Activated B cell treated with CpG ODN at 0.5 μM for 24 hours (primary cell): ENCODE measurements at regions of chr12 and their contacts with region 1.

Region 1: DNA sequence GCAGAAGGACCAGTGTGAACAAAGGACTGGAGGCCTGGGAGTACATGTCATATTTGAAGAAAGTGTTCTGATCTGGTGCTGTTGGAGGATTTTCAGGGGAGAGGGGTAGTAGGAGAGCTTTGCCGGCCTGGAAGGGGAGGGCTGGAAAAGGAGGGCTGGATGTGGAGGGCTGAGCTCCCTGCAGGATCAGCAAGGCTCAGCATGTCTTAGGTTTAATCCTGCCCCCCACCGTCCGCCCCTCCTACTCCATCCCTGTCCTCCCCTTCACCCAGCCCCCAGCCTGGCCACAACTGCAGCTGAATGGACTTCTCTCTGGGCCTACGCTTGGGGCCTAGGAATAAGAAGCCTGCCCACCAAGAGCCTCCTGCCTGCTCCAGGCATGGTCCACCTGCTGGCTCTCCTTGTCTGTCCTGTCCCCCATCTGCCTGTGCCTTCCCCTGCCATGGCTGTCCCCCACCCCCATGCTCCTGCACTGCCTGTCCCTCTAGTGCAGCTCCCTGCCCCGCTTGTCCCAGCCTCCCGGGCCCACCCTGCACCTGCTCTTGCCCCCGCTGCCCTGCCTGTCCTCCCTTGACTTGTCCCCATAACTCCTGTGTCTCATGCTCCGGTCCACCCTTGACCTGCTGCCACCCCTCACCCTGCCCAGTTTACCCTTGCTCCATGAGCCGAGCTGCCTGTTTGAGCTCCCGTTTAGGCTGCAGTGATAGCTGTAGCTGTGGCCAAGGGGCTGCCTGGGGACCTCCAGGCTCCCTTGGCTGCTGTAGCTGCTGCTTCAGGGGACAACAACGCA is 9.8 kb upstream of the RARG start:
- DNase-seq: no peak
- ATAC-seq: no peak
- H3K4me3 Mint-ChIP-seq: no peak overlapping the region
- H3K27ac Mint-ChIP-seq: no peak overlapping the region
- H3K4me1 Mint-ChIP-seq: peaks cover 20% of the 10 kb centered on the region
- H3K27me3 Mint-ChIP-seq: peaks cover 4% of the 10 kb centered on the region
- CTCF ChIP-seq: no peak

Region 2: GRCh38 chr12:52050761-52051541 is 1190.9 kb before region 1 on chr12 and contains the start of gene NR4A1:
- CTCF ChIA-PET with region 1: no interaction called
- POLR2A ChIA-PET with region 1: no interaction called
- intact Hi-C with region 1: no loop called
- DNase-seq: peak; percentile 100
- ATAC-seq: peak; percentile 82
- H3K4me3 Mint-ChIP-seq: peak within 1 kb of the TSS; percentile 92
- H3K27ac Mint-ChIP-seq: peak within 1 kb of the TSS; percentile 95
- H3K4me1 Mint-ChIP-seq: peaks cover 49% of the 10 kb centered on the region
- H3K27me3 Mint-ChIP-seq: no peaks in the 10 kb centered on the region
- CTCF ChIP-seq: no peak
- total RNA-seq, gene NR4A1: 18.8 and 24.2 TPM in 2 replicates

Region 3: GRCh38 chr12:53129170-53129569 is 112.6 kb before region 1 on chr12:
- CTCF ChIA-PET with region 1: no interaction called
- POLR2A ChIA-PET with region 1: interaction called, 10 read pairs
- intact Hi-C with region 1: no loop called
- DNase-seq: no peak
- ATAC-seq: no peak
- H3K4me3 Mint-ChIP-seq: no peak overlapping the region
- H3K27ac Mint-ChIP-seq: no peak overlapping the region
- H3K4me1 Mint-ChIP-seq: peaks cover 4% of the 10 kb centered on the region
- H3K27me3 Mint-ChIP-seq: peaks cover 13% of the 10 kb centered on the region
- CTCF ChIP-seq: no peak

Region 4: GRCh38 chr12:53190108-53190729 is 51.6 kb before region 1 on chr12:
- CTCF ChIA-PET with region 1: no interaction called
- POLR2A ChIA-PET with region 1: interaction called, 12 read pairs
- intact Hi-C with region 1: no loop called
- DNase-seq: no peak
- ATAC-seq: peak; percentile 89
- H3K4me3 Mint-ChIP-seq: no peak overlapping the region
- H3K27ac Mint-ChIP-seq: peak overlapping the region; percentile 31
- H3K4me1 Mint-ChIP-seq: peaks cover 8% of the 10 kb centered on the region
- H3K27me3 Mint-ChIP-seq: no peaks in the 10 kb centered on the region
- CTCF ChIP-seq: no peak

Region 5: DNA sequence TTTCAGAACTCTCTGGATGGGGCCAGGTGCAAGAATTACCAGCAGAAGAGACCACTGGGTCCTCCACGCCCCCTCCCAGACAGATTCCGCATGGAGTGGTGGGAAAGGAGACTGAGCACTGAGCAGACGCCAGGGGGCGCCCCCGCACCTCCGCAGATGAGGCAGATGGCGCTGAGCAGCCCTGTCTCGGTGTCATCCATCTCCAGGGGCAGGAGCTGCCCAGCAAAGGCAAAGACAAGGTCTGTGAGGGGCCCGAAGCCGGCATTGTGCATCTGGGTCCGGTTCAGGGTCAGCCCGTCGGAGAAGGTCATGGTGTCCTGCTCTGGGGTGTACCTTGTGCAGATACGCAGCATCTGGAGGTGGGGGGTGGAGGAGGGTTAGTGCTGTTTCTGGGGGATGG is 28.5 kb before region 1 on chr12:
- CTCF ChIA-PET with region 1: interaction called, 13 read pairs
- POLR2A ChIA-PET with region 1: interaction called, 3 read pairs
- intact Hi-C with region 1: no loop called
- DNase-seq: peak; percentile 82
- ATAC-seq: peak; percentile 75
- H3K4me3 Mint-ChIP-seq: no peak overlapping the region
- H3K27ac Mint-ChIP-seq: peak overlapping the region; percentile 6
- H3K4me1 Mint-ChIP-seq: peaks cover 76% of the 10 kb centered on the region
- H3K27me3 Mint-ChIP-seq: no peaks in the 10 kb centered on the region
- CTCF ChIP-seq: peak; percentile 49